ENCODE measurements at regions of chr15 and their contacts with region 1.

Region 1: DNA sequence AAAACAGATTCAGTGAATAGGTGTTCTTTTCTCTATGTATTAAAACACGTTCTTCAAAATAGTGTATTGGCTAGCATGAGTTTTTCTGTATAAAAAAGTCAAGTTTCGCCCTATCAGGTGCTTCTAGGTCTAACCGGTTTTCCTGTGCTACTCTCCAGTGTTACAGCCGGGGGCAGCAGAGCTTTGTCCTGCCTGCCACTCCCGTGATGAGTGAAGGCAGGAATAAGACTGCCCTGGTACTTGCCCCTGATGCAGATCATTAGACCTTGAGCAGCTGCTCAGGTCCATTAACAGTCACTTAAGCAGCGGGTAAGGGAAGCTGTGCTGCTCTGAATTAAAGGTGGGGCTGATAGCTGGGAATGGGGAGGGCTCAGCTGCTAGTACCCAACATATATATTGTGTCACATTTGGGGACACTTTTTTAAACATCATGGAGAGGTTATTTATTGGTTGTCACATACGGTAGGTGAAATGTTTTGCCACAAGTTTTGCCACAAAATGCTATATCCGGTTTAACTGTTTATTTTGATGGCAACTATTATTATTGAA is 1.3 kb upstream of the UNC13C start:
- DNase-seq: peak; percentile 22
- H3K4me3 ChIP-seq: peak overlapping the region in 1 of 2 experiments; percentile 21; a peak in 1 of 4 replicates
- H3K27ac ChIP-seq: no peak overlapping the region
- H3K4me1 ChIP-seq: peaks cover 0 to 8% of the 10 kb centered on the region in 2 experiments; a peak in 1 of 4 replicates
- H3K27me3 ChIP-seq: no peaks in the 10 kb centered on the region
- CTCF ChIP-seq: peak; percentile 19; the same call in 1 of the 2 replicates
- EP300 ChIP-seq: no peak
- RAD21 ChIP-seq: peak; percentile 47

Region 2: DNA sequence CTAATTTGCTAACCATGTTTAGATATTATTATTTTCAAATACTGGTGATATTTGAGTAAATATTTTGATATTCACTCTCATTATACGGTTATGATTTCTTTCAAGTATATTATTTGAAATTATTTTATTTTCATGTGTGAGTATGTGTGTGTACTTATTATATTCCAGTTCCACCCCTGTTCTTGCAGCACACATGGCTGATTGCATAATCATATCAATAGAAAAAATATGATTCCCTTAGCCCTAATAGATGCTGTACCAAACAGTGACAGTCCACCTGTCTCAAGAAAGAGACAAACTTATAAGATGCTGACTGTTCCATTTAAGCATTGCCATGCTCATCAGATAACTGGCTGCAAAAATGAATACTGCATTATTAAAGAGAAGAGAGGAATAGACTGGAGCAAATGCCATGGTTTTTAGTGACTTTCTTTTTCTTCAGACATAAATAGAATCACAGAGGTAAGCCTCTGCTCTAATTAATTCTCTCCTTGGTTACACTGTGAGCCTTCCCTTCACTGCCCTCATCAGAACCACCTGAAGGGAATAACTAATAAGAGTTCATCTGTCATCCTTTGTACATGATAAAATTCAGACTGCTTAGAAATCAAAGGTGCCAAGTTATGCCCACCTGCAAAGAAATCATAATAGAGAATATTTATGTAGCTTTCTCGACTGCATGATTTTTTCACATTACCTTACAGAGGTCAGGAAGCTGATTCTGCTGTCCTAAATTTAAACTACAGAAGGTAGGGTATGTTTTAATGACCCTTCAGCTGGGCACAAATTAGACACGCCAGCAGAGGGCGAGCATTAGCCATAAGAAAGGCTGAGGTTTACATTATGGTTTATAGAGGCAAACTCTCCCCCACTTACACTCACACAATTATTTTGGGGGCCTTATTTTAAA is 14.3 kb before region 1 on chr15:
- CTCF ChIA-PET with region 1: interaction called, 22 read pairs
- POLR2A ChIA-PET with region 1: no interaction called
- DNase-seq: peak; percentile 8
- H3K4me3 ChIP-seq: no peak overlapping the region
- H3K27ac ChIP-seq: no peak overlapping the region
- H3K4me1 ChIP-seq: no peaks in the 10 kb centered on the region
- H3K27me3 ChIP-seq: no peaks in the 10 kb centered on the region
- CTCF ChIP-seq: peak; percentile 65
- EP300 ChIP-seq: no peak
- RAD21 ChIP-seq: peak; percentile 70